Dendritic cell treated with granulocyte-macrophage colony-stimulating factor and Interleukin-4, amounts not matched to agents 40 ng/mL and 50 ng/mL, for 4 days (primary cell): ENCODE measurements at regions of chr17 and their contacts with region 1.

Region 1: GRCh38 chr17:67689534-67690177 is 28.1 kb upstream of the NOL11 start:
- H3K4me3 Mint-ChIP-seq: no peak overlapping the region
- H3K27ac Mint-ChIP-seq: no peak overlapping the region
- H3K4me1 Mint-ChIP-seq: peaks cover 18% of the 10 kb centered on the region
- H3K27me3 Mint-ChIP-seq: no peaks in the 10 kb centered on the region

Region 2: GRCh38 chr17:67376737-67377487 is 312.7 kb before region 1 on chr17 and contains the start of gene PITPNC1:
- intact Hi-C with region 1: loop called (anchors 2 kb)
- H3K4me3 Mint-ChIP-seq: peak within 1 kb of the TSS; percentile 96
- H3K27ac Mint-ChIP-seq: peak within 1 kb of the TSS; percentile 91
- H3K4me1 Mint-ChIP-seq: peaks cover 26% of the 10 kb centered on the region
- H3K27me3 Mint-ChIP-seq: peaks cover 7% of the 10 kb centered on the region

Region 3: DNA sequence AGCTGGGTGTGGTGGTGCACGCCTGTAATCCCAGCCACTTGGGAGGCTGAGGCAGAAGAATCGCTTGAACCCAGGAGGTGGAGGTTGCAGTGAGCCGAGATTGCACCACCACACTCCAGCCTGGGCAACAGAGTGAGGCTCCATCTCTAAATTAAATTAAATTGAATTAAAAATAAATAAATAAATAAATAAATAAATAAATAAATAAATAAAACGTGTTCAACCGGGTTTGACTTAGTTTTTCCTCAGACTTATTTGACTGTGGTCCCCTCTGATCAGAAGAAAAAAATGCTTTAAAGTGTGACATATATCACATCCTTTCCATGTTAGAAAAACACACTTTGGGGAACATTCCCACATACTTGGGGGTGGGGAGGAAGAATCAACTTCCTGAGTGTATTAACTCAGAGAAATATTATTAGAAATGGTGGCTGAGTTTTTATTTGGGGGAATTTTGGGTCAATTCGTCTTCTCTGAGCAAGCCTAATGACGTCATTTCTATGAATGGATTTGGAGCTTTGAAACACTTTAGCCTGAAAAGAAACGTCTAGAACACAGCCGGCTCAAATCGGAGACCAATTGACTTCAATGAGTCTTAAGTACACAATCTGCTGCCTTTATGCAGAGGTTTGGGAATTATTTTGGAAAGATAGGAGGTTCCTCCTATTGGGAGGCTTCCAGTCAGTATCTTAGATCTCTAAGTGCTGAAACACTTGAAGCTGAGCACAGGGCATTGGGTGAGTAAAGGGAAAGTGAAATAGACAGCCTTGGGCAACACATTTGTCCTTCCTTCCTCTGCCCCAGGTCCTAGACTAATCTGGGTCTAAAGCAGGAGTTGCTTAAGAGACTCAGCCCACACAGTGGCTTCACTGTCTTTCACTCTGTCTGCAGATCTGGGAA is 180.0 kb before region 1 on chr17:
- intact Hi-C with region 1: loop called (anchors 5 kb)
- H3K4me3 Mint-ChIP-seq: peak overlapping the region; percentile 73
- H3K27ac Mint-ChIP-seq: peak overlapping the region; percentile 88
- H3K4me1 Mint-ChIP-seq: peaks cover 15% of the 10 kb centered on the region
- H3K27me3 Mint-ChIP-seq: no peaks in the 10 kb centered on the region

Region 4: DNA sequence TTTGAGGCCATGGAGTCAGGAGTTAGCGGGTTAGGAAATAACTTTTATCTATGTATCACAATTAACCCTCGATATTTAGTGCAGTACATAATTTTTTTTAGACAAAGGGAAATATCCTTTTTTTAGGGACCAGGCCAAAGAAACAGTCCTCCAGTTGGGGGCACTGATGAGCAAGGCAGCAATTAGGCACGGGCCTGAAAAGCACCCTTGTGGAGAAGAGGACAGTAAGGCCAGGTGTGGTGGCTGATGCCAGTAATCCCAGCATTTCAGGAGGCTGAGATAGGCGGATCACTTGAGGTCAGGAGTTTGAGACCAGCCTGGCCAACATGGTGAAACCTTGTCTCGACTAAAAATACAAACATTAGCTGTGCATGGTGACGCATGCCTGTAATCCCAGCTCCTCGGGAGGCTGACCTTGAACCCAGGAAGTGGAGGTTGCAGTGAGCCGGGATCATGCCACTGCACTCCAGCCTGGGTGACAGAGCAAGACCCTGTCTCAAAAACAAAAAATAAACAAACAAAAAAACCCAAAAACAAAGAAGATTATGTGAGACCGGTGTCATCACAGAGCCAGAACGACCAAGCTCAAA is 130.2 kb before region 1 on chr17:
- intact Hi-C with region 1: loop called (anchors 1 kb)
- H3K4me3 Mint-ChIP-seq: no peak overlapping the region
- H3K27ac Mint-ChIP-seq: peak overlapping the region; percentile 50
- H3K4me1 Mint-ChIP-seq: peaks cover 25% of the 10 kb centered on the region
- H3K27me3 Mint-ChIP-seq: peaks cover 2% of the 10 kb centered on the region

Region 5: GRCh38 chr17:67628580-67629013 is 61.1 kb before region 1 on chr17:
- intact Hi-C with region 1: no loop called
- H3K4me3 Mint-ChIP-seq: no peak overlapping the region
- H3K27ac Mint-ChIP-seq: no peak overlapping the region
- H3K4me1 Mint-ChIP-seq: no peaks in the 10 kb centered on the region
- H3K27me3 Mint-ChIP-seq: no peaks in the 10 kb centered on the region

Region 6: GRCh38 chr17:67671492-67671891 is 18.2 kb before region 1 on chr17:
- intact Hi-C with region 1: no loop called
- H3K4me3 Mint-ChIP-seq: no peak overlapping the region
- H3K27ac Mint-ChIP-seq: no peak overlapping the region
- H3K4me1 Mint-ChIP-seq: no peaks in the 10 kb centered on the region
- H3K27me3 Mint-ChIP-seq: no peaks in the 10 kb centered on the region